A549 (cell line): ENCODE measurements at regions of chr5 and their contacts with region 1.

Region 1: DNA sequence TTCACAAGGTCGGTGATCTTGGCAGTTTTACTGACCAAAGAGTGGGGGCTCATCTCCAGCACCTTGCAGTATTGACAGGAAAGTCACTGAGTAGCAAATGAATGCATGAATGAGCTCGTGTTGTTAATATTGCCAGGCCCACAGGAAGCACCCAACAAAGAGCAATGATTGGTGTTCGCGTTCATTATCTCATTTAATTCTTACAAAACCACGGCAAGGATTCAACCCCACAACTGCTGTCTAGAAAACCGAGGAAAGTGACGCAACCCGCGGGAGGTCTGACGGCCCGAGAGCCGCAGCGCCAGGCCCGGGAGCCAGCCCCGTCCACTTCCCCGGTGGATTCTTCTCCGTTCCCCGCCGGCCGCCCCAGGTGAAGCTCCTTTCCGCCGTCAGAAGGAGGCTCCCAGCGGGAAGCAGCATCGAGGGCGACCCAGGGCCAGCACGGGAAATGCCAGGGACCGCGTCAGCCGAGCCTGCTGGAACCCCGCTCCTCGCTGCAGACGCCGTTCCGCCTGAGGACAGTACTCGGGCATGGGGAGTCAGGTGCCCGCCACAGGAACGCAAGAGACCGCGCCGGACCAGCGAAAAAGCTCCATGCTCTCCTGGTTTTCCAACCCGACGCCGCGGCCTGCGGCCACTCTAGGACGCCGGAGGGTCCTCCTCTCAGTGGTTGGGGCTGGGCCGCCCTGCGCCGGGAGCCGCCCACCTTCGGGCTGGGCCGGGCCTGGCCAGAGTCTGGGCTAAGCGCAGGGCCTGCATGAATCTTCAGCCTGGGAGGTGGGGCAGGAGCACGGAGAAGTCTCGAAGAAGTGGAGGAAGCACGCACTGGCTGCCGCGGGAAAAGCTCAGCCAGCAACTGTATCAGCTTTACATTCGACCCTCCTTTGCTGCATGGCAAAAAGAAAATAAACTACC is 19.8 kb upstream of the FER start:
- DNase-seq: peak; percentile 94 to 96
- ATAC-seq: peak; percentile 99 to 100
- H3K4me3 ChIP-seq: peak overlapping the region; percentile 77
- H3K27ac ChIP-seq: peak overlapping the region; percentile 93 to 96
- H3K4me1 ChIP-seq: peaks cover 12% of the 10 kb centered on the region; the same call in 2 of the 3 replicates
- CTCF ChIP-seq: no peak
- EP300 ChIP-seq: no peak
- POLR2A ChIP-seq: peak; percentile 82
- RAD21 ChIP-seq: peak in 1 of 2 experiments; percentile 39; a peak in 4 of 5 replicates

Region 2: DNA sequence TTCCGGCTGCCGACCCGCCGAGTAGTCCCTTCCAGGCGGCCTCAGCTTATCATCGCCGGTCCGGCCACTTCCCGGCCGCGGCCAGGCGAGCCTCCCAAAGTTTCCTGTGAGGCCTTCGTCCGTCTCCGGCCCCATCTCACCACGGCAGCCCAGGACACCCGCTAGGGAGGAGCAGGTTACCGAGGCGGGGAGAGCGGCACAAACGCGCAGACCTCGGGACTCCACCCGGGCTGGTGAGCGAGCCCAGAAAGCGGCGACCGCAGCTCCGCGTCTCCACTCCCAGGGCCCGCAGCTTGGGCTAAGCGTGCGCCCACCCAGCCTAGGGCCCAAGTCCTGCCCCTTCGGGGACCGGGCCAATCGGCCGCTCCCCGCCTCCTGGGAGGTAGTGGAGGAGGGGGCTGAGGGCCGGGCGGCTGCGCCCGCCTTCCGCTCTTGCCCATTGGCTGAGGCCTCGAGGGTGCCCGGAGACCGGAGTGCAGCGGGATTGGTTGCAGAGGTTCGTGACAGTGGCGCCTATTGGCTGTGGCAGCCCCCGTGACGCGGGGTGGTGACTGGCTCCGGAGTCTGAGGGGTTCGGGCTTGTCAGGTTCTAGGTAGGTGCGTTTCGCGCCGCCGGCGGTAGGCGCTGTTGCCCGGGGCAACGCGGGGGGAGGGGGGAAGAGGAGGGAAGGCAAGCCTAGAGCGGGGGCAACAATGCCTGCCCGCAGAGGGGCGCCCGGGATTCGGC is 20.7 kb after region 1 on chr5:
- CTCF ChIA-PET with region 1: no interaction called
- POLR2A ChIA-PET with region 1: interaction called, 47 read pairs
- DNase-seq: peak; percentile 95 to 98
- ATAC-seq: peak; percentile 95 to 97
- H3K4me3 ChIP-seq: peak overlapping the region; percentile 77
- H3K27ac ChIP-seq: peak overlapping the region; percentile 83 to 94
- H3K4me1 ChIP-seq: peaks cover 20% of the 10 kb centered on the region
- CTCF ChIP-seq: peak; percentile 17; the same call in 1 of the 3 replicates
- EP300 ChIP-seq: no peak
- POLR2A ChIP-seq: peak; percentile 96
- RAD21 ChIP-seq: peak; percentile 19 to 45; a peak in 2 of 5 replicates

Region 3: DNA sequence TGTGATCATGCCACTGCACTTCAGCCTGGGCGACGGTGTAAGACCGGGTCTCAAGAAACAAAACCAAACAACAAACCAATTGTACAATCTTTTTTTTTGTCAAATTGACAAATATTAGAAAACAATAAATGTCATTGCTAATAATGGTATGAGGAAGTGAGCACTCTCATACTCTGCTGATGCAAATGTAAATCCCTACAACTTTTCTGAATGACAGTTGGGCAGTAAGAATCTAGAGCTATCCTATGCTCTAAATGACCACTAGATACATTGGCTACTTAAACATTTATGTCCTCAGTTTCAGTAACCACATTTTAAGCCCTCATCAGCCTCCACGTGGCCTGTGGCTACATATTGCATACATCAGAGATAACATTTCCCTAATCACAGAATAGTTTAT is 276.0 kb after region 1 on chr5:
- CTCF ChIA-PET with region 1: no interaction called
- POLR2A ChIA-PET with region 1: no interaction called
- DNase-seq: no peak
- ATAC-seq: no peak
- H3K4me3 ChIP-seq: no peak overlapping the region
- H3K27ac ChIP-seq: no peak overlapping the region
- H3K4me1 ChIP-seq: no peaks in the 10 kb centered on the region
- CTCF ChIP-seq: no peak
- EP300 ChIP-seq: no peak
- POLR2A ChIP-seq: no peak
- RAD21 ChIP-seq: no peak

Region 4: GRCh38 chr5:109125755-109126429 is 398.0 kb after region 1 on chr5:
- CTCF ChIA-PET with region 1: no interaction called
- POLR2A ChIA-PET with region 1: no interaction called
- DNase-seq: no peak
- ATAC-seq: no peak
- H3K4me3 ChIP-seq: no peak overlapping the region
- H3K27ac ChIP-seq: no peak overlapping the region
- H3K4me1 ChIP-seq: no peaks in the 10 kb centered on the region
- CTCF ChIP-seq: no peak
- EP300 ChIP-seq: no peak
- POLR2A ChIP-seq: no peak
- RAD21 ChIP-seq: no peak

Region 5: DNA sequence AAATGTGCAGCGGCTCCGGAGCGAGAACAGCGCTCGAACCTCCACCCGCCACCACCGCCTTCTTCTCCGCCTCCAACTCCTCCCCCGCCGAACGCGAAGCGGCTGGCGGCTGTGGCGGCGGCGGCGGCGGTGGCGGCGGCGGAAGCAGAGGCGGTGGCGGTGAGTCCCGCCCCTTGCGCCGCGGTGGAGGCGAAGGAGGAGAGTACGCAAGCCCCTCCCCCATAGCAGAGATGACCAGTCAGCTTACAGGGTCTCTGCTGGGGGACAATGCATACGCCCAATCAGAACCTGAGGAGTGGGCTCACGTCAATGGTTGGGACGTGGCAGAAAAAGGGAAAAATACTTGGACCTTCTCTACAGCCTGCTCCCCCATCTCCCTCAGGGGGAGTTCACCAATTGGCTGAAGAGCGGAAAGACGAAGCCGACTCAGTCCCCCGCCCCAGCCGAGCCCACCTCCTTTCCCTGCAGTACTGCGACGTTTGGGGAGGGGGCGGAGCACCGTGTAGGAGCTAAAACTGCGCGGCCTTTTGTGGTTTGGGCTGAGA is 682.0 kb after region 1 on chr5 and contains the start of gene PJA2:
- CTCF ChIA-PET with region 1: no interaction called
- POLR2A ChIA-PET with region 1: interaction called, 12 read pairs
- DNase-seq: peak; percentile 98 to 100
- ATAC-seq: peak; percentile 88 to 93
- H3K4me3 ChIP-seq: peak within 1 kb of the TSS; percentile 74
- H3K27ac ChIP-seq: peak within 1 kb of the TSS; percentile 84 to 95
- H3K4me1 ChIP-seq: peaks cover 34% of the 10 kb centered on the region
- CTCF ChIP-seq: no peak
- EP300 ChIP-seq: no peak
- POLR2A ChIP-seq: peak; percentile 26
- RAD21 ChIP-seq: 0 out of 5 replicates have a peak, but pooled peaks of 1 of the 2 experiments have one; percentile 3
- polyA plus RNA-seq, gene PJA2: 47.2 and 56.5 TPM in 2 replicates